Heart left ventricle (tissue), 16 donors: ENCODE measurements at regions of chr10 and their contacts with region 1.

Region 1: GRCh38 chr10:106401161-106401560 is 763.3 kb downstream of the SORCS1 start:
- DNase-seq: no peak
- ATAC-seq: no peak
- H3K4me3 ChIP-seq: no peak overlapping the region
- H3K27ac ChIP-seq: no peak overlapping the region
- H3K4me1 ChIP-seq: peaks cover 0 to 5% (median 0%) of the 10 kb centered on the region in 12 donors
- H3K27me3 ChIP-seq: no peaks in the 10 kb centered on the region
- CTCF ChIP-seq: peak in 3 of 12 donors; percentile 9 to 25 (median 12)
- POLR2A ChIP-seq: no peak

Region 2: GRCh38 chr10:106571192-106571946 is 170.2 kb after region 1 on chr10:
- intact Hi-C with region 1: loop called in 3 of 10 experiments (anchors 10 kb)
- DNase-seq: no peak
- ATAC-seq: no peak
- H3K4me3 ChIP-seq: no peak overlapping the region
- H3K27ac ChIP-seq: no peak overlapping the region
- H3K4me1 ChIP-seq: no peaks in the 10 kb centered on the region
- H3K27me3 ChIP-seq: peaks cover 0 to 4% (median 0%) of the 10 kb centered on the region in 9 donors
- CTCF ChIP-seq: peak; percentile 24 to 59 (median 43)
- POLR2A ChIP-seq: no peak

Region 3: DNA sequence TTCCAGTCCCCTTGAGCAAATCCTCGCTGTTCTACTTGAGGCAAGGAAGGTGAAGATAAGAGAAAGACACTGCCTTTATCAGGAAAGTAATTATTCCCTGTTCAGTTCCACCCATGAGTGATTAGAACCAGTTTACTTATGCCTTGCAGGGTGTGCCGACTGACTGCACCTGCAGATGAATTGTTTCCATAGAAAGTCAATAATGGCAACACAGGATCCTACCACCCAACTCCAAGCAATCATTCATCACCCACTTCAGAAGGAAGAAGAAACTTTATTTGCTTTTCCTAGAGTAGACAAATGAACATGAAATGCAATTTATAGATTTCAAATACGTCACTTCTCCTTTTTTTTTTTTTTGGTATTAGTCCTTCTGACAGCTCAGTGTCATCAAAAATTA is 379.5 kb after region 1 on chr10:
- intact Hi-C with region 1: no loop called
- DNase-seq: no peak
- ATAC-seq: no peak
- H3K4me3 ChIP-seq: no peak overlapping the region
- H3K27ac ChIP-seq: no peak overlapping the region
- H3K4me1 ChIP-seq: no peaks in the 10 kb centered on the region
- H3K27me3 ChIP-seq: peaks cover 0 to 7% (median 0%) of the 10 kb centered on the region in 9 donors
- CTCF ChIP-seq: no peak
- POLR2A ChIP-seq: no peak